Right ventricle myocardium inferior (tissue), 1 donor: ENCODE measurements at regions of chr10 and their contacts with region 1.

Region 1: DNA sequence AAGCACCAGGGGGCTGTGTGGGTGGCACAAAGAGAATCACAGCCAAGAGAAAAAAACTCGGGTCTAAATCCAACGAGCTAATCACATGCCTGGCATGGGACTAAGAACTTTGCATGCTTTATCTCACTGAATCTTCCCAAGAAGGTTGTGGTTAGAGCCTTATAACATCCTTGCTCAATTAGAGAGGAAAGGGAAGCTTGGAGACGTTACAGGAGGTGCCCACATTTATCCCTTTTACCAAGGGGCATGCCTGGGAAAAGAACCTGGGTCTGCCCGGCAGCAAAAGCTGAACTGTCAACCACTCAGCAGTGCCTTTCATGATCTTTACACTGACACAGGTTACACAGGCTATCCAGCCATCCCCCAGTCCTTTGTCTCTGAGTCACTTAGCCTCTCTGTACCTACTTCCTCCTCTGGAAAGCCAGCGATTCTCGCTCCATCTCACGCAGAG is 190.1 kb downstream of the PRPF18 start:
- DNase-seq: no peak
- ATAC-seq: no peak

Region 2: GRCh38 chr10:13613519-13613918 is 163.4 kb before region 1 on chr10:
- intact Hi-C with region 1: loop called (anchors 2 kb)
- DNase-seq: no peak
- ATAC-seq: peak; percentile 83

Region 3: DNA sequence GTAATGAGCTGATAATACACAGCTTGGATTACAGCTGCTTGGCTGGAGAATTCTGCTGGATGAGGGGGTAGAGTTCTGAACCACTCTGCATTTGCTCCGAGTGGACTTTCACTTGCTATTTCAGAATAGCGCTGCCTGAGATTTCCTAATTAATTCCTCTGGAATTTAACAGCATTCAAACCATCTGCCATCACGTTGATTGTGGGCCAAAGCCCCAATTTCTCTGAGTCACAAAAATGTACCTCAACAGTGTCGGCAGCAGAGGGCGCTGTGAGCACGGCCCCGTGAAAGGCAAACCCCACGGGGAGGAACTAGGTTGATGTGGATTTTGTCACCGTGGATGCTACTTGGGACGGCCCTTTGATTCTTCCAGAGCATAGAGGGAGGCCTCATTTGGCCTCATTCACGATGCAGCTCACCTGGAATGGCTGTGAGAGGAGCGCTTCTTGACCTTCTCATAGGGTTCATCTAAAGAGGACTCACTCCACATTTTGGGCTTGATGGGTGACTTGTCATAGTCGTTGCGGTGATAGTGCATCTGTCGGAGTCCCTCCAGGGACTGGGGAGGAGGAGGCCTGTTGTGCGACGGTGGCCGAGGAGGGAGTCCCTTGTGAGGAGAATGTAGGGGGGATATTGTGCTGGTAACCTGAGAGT is 116.9 kb before region 1 on chr10:
- intact Hi-C with region 1: loop called (anchors 1 kb)
- DNase-seq: peak; percentile 80
- ATAC-seq: peak; percentile 83

Region 4: DNA sequence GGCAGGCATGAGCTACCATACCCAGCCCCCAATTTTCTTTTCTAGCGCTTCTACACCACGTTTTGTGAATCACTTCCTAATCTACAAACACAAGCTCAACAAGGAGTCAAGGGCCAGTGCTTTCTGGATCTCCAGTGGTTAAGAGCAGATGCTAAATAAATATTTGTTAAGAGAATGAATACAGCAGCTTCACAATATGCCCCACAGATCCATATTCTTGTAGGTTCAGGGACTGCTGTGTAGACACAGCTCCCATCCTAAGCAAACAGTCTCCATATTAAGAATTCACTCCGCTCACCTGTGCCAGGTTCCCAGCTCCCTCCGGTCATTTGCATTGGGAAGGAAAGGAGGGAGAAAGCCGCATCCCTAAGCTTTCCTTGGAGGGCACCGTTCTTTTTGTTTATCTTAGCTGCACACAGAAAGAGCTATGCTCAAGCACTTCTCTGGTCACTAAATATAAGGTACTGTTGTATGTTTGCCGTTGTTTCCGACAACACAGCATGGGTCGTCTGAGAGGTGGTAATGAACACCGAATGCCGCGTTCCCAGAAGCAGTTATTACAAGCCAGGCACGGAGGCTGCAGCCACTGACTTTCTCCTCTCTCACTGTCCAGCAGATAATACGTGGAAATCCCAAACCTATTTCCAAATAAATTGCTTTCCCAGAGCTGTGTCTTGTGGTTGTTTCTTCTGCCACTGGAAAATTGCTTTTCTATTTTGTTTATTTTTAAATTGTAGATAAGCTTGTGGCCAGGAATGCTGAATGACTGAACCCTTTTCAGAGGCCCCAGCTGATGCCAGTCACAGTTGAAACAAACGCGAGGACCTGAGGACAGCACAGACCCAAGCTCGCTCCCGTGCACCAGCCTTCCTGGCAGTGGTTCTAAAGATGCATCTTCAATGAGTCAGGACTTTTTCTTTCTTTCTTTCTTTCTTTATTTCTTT is 27.0 kb after region 1 on chr10:
- intact Hi-C with region 1: no loop called
- DNase-seq: no peak
- ATAC-seq: peak; percentile 69